ENCODE measurements at regions of chr4 and their contacts with region 1.

Region 1: DNA sequence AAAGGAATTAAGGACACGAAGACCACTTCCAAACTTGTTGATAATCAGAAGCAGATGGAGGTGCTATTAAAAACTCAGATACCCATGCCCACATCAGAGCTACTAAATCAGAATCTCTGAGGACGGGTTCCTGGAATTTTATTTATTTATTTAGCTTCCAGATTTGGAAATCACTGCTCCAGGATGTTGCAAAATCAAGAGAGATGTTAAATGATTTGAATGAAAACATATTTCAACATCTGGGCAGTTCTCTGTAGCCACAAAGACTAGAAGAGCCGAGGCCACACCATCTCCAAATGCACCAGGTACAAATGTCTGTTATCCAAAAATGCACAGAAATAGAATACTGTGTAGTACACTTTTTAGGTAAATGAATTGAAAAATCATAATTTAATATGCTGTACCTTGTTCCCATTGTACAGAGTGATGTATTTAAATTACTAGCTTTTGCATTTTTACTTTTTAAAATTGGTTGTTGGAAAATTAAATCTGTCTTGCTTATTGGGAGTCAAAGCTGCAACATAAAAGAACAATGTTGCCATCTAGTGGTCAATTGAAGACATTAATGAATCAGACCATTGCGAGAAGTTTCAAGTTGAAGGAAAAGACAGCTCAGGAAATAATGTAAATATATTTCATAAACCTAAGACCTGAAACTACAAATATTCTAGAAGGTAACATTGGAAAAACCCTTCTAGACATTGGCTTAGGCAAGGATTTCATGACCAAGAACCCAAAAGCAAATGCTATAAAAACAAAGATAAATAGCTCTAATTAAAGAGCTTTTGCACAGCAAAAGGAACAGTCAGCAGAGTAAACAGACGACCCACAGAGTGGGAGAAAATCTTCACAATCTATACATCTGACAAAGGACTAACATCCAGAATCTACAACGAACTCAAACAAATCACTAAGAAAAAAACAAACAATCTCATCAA is 151.3 kb upstream of the TTC29 start:
- DNase-seq: no peak
- H3K4me3 ChIP-seq: no peak overlapping the region
- H3K27ac ChIP-seq: no peak overlapping the region
- H3K4me1 ChIP-seq: peaks cover 0 to 12% (median 6%) of the 10 kb centered on the region in 4 donors
- H3K27me3 ChIP-seq: no peaks in the 10 kb centered on the region
- CTCF ChIP-seq: peak; percentile 70 to 71 (median 71)
- EP300 ChIP-seq: no peak
- POLR2A ChIP-seq: no peak

Region 2: DNA sequence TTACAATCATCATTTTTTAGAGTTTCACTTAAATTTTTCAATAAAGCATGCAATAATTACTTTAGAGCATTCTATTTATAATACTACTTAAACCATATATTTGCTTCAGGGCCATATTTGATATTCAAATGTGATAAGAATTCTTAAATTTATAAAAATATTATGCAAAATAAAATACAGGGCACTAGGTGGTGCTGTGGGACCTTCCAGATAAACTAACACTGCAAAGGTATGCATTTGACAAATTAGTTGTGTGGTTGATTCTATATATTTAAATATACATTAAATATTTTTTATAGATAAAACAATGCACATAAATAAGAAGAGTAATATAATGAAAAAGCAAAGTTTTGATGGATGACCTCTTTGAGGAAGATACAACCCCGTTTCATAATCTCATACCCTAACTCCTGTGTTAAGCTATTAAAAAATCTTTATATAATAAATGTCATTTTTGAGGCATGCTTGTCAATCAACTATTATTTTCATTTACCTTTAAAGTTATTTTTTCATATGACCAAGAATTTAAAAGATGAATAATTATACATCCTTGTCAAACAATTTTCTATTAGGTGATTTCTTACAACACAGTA is 754.2 kb before region 1 on chr4:
- intact Hi-C with region 1: loop called (anchors 10 kb)
- DNase-seq: no peak
- H3K4me3 ChIP-seq: no peak overlapping the region
- H3K27ac ChIP-seq: no peak overlapping the region
- H3K4me1 ChIP-seq: no peaks in the 10 kb centered on the region
- H3K27me3 ChIP-seq: no peaks in the 10 kb centered on the region
- CTCF ChIP-seq: peak; percentile 51 to 58 (median 57)
- EP300 ChIP-seq: no peak
- POLR2A ChIP-seq: no peak

Region 3: GRCh38 chr4:147019061-147019460 is 77.9 kb before region 1 on chr4:
- intact Hi-C with region 1: loop called (anchors 2 kb)
- DNase-seq: no peak
- H3K4me3 ChIP-seq: no peak overlapping the region
- H3K27ac ChIP-seq: no peak overlapping the region
- H3K4me1 ChIP-seq: no peaks in the 10 kb centered on the region
- H3K27me3 ChIP-seq: no peaks in the 10 kb centered on the region
- CTCF ChIP-seq: peak; percentile 70 to 76 (median 74)
- EP300 ChIP-seq: no peak
- POLR2A ChIP-seq: no peak